KBM-7 (cell line): ENCODE measurements at regions of chr22 and their contacts with region 1.

Region 1: DNA sequence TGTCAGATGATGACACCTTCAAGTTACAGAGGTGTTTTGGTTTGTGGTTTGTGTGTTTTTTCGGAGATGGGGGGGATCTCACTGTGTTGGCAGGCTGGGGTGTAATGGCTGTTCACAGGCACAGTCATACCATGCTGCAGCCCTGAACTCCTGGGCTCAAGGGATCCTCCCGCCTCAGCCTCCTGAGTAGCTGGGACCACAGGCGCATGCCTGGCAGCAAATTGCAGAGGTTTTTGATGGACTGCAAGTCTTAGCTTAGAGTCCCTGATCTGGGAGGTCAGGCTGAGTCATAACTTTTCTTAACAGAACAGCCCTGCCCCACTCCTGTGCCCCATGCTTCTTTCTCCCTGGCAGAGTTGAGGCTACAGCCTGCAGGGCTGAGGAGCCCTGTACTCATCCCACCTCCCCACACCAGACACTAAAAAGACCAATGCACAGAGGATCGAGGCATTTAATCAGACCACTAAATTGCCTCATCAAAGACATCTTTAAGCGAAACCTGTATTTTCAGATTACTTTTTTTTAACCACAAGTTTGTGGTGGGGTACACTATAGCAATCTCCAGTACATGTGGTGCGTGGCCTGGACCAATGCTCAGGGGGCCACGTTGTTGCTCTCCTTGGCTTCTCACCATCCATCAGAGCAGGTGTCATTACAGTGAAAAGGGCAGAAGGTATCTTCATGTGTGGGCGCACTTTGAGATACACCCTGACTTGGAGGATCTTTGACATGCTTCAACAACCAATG is 17.1 kb upstream of the ADORA2A start:
- DNase-seq: no peak

Region 2: GRCh38 chr22:24516301-24516737 is 106.0 kb after region 1 on chr22:
- in situ Hi-C with region 1: loop called (anchors 10 kb)
- DNase-seq: no peak